CD4-positive, alpha-beta memory T cell (primary cell): ENCODE measurements at regions of chr2 and their contacts with region 1.

Region 1: GRCh38 chr2:190515687-190516086 is 18.8 kb downstream of the NEMP2 start:
- DNase-seq: peak in 4 of 5 donors; percentile 53 to 65 (median 58)
- H3K4me3 ChIP-seq: no peak overlapping the region
- H3K4me3 Mint-ChIP-seq: peak overlapping the region in 7 of 8 donors; percentile 22 to 68 (median 50)
- H3K27ac ChIP-seq: no peak overlapping the region
- H3K27ac Mint-ChIP-seq: peak overlapping the region; percentile 8 to 84 (median 62)
- H3K4me1 ChIP-seq: peaks cover 37% of the 10 kb centered on the region
- H3K4me1 Mint-ChIP-seq: peaks cover 20 to 45% (median 33%) of the 10 kb centered on the region in 4 donors
- H3K27me3 ChIP-seq: no peaks in the 10 kb centered on the region
- H3K27me3 Mint-ChIP-seq: no peaks in the 10 kb centered on the region

Region 2: DNA sequence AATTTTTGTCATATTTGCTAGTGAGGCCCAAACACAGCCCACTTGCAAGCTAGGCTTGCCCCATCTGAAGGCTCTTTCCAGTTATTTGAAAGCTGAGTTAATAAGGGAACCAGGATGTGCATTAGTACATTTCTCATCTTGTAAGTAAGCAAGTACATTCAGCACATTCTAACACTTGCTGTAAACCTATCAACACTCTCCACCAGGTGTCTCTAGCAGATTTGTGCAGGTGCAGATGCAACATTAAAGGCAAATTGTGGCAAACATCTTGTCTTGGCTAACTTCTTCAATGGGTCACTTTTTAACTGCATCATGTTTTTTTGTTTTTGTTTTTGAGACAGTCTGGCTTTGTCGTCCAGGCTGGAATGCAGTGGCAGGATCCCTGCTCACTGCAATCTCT is 132.8 kb before region 1 on chr2:
- CTCF ChIA-PET with region 1: interaction called, 4 read pairs
- POLR2A ChIA-PET with region 1: no interaction called
- intact Hi-C with region 1: loop called (anchors 2 kb)
- DNase-seq: peak; percentile 50 to 66 (median 61)
- H3K4me3 ChIP-seq: no peak overlapping the region
- H3K4me3 Mint-ChIP-seq: no peak overlapping the region
- H3K27ac ChIP-seq: no peak overlapping the region
- H3K27ac Mint-ChIP-seq: no peak overlapping the region
- H3K4me1 ChIP-seq: no peaks in the 10 kb centered on the region
- H3K4me1 Mint-ChIP-seq: peaks cover 0 to 3% (median 0%) of the 10 kb centered on the region in 4 donors
- H3K27me3 ChIP-seq: no peaks in the 10 kb centered on the region
- H3K27me3 Mint-ChIP-seq: peaks cover 0 to 1% of the 10 kb centered on the region in 2 donors

Region 3: GRCh38 chr2:190408538-190409271 is 107.0 kb before region 1 on chr2:
- CTCF ChIA-PET with region 1: interaction called, 3 read pairs
- POLR2A ChIA-PET with region 1: interaction called, 13 read pairs
- intact Hi-C with region 1: loop called (anchors 5 kb)
- DNase-seq: peak; percentile 78 to 86 (median 84)
- H3K4me3 ChIP-seq: peak overlapping the region; percentile 67 to 78
- H3K4me3 Mint-ChIP-seq: peak overlapping the region; percentile 89 to 95 (median 92)
- H3K27ac ChIP-seq: peak overlapping the region; percentile 96
- H3K27ac Mint-ChIP-seq: peak overlapping the region; percentile 96 to 99 (median 98)
- H3K4me1 ChIP-seq: peaks cover 54% of the 10 kb centered on the region
- H3K4me1 Mint-ChIP-seq: peaks cover 37 to 52% (median 41%) of the 10 kb centered on the region in 4 donors
- H3K27me3 ChIP-seq: no peaks in the 10 kb centered on the region
- H3K27me3 Mint-ChIP-seq: no peaks in the 10 kb centered on the region